Heart right ventricle (tissue), 16 donors: ENCODE measurements at regions of chr6 and their contacts with region 1.

Region 1: DNA sequence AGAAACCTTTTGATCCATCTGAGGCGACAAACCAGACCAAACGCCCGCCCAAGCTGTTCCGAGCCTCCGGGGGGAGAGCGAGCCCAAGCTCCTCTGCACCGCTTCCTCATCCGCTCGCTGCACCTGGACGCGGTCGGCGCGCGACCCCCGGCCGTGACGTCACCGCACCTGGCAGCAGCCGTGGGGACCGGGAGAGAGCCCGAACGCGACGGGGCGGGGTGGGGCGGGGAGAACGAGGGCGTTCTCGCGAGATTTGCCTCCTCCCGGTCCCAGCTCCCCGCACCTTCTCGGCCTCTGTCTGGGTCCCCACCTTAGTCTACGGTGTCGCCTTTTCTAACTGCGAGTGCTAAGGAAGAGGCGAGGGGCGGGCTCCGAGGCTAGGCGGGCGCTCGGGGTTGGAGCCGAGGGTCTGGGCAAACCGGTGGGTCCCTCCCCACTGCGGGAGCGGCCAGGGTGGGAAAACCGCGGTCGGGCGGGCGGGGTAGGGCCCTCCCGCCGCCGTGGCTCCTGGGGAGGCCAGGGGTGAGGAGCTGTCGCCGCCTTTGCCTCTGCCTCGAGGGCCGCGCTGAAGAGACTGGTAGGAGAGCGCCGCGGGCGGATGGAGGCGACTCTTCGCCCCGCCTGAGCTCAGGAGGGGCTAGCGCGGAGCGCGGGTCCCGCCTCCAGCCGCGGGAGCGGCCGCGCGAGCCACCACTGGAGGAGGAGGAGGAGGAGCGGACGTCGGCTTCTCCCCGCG is at the start of gene CD2AP:
- DNase-seq: peak; percentile 86 to 89
- ATAC-seq: peak; percentile 96 to 98 (median 96)
- H3K4me3 ChIP-seq: peak within 1 kb of the TSS; percentile 33 to 98 (median 90)
- H3K27ac ChIP-seq: peak within 1 kb of the TSS; percentile 95 to 99 (median 97)
- H3K4me1 ChIP-seq: peaks cover 0 to 57% (median 22%) of the 10 kb centered on the region in 9 donors
- H3K27me3 ChIP-seq: no peaks in the 10 kb centered on the region
- CTCF ChIP-seq: peak in 5 of 9 donors; percentile 12 to 48 (median 32)
- total RNA-seq, gene CD2AP: 8.5 to 15.6 (median 10.8) TPM

Region 2: DNA sequence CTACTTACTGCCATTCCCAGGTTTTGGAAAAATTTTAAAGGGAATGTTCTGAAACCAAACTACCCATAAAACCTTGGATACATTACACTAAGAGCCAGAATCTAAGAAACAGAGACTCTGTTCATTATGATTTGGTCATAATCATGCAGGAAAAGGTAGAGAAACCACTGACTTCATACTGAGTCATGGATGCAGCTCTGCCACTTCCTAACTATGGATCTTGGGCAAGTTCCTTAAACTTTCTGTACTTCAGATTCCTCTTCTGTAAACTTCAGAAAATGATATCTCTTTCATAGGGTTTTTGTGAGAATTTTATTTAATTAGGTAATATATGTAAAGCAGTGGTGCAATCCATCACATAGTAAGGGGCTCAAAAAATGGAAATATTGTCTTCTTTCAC is 762.5 kb before region 1 on chr6:
- intact Hi-C with region 1: no loop called
- DNase-seq: no peak
- ATAC-seq: no peak
- H3K4me3 ChIP-seq: no peak overlapping the region
- H3K27ac ChIP-seq: peak overlapping the region in 1 of 10 donors; percentile 29
- H3K4me1 ChIP-seq: peaks cover 0 to 13% (median 0%) of the 10 kb centered on the region in 9 donors
- H3K27me3 ChIP-seq: peaks cover 0 to 5% (median under 1%) of the 10 kb centered on the region in 7 donors
- CTCF ChIP-seq: no peak

Region 3: GRCh38 chr6:47438481-47439347 is 39.0 kb before region 1 on chr6:
- intact Hi-C with region 1: loop called in 1 of 10 experiments (anchors 2 kb)
- DNase-seq: peak in 1 of 2 donors; percentile 34
- ATAC-seq: peak in 7 of 8 donors; percentile 43 to 79 (median 60)
- H3K4me3 ChIP-seq: no peak overlapping the region
- H3K27ac ChIP-seq: peak overlapping the region in 1 of 10 donors; percentile 57
- H3K4me1 ChIP-seq: peaks cover 0 to 27% (median 19%) of the 10 kb centered on the region in 9 donors
- H3K27me3 ChIP-seq: no peaks in the 10 kb centered on the region
- CTCF ChIP-seq: no peak

Region 4: GRCh38 chr6:47581591-47581990 is 103.9 kb after region 1 on chr6:
- intact Hi-C with region 1: loop called in 1 of 10 experiments (anchors 10 kb)
- DNase-seq: no peak
- ATAC-seq: no peak
- H3K4me3 ChIP-seq: no peak overlapping the region
- H3K27ac ChIP-seq: no peak overlapping the region
- H3K4me1 ChIP-seq: no peaks in the 10 kb centered on the region
- H3K27me3 ChIP-seq: no peaks in the 10 kb centered on the region
- CTCF ChIP-seq: no peak